HepG2 (cell line): ENCODE measurements at regions of chr5 and their contacts with region 1.

Region 1: DNA sequence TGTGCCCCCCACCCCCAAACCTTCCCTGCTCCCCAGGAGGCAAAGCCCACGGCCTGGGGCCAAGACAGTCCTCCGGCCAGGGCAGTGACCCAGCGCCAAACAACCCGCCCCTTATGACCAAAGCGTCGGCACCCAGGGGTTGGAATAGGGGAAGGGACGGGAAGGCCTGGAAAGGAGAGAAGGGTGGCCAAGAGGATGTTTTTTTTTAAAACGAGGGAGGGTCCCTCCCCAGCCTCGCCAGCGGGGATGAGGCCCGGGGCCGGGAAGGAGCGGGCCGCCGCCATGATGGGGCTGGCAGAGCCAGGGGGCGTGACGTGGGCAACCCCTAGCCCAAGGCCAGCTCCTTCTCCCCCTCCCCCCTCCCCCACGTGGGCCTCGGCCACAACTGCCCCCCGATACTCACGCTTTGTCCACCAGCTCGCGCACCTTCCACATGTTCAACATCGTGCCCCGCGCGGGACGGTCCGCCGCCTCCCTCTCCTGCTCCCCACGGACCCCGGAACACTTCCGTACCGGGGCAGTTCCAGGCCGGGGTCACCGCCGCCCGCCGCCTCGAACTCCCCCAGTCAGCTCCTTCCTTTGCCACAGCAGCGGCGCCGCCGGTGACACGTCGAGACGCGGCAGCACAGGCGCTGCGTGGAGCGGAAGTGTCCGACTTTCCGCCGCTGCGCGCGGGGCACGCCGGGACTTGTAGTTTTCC is at the start of gene CLINT1:
- DNase-seq: peak; percentile 83
- ATAC-seq: peak; percentile 96
- H3K4me3 ChIP-seq: peak within 1 kb of the TSS; percentile 82 to 92 (median 86)
- H3K27ac ChIP-seq: peak within 1 kb of the TSS; percentile 78
- H3K4me1 ChIP-seq: peaks cover 62% of the 10 kb centered on the region
- H3K27me3 ChIP-seq: no peaks in the 10 kb centered on the region
- CTCF ChIP-seq: 0 out of 2 replicates have a peak, but pooled peaks have one; percentile 25
- EP300 ChIP-seq: no peak; a peak in 1 of 4 replicates
- POLR2A ChIP-seq: peak; percentile 54 to 81
- RAD21 ChIP-seq: 0 out of 2 replicates have a peak, but pooled peaks have one; percentile 17
- total RNA-seq, gene CLINT1: 64.0 and 82.9 TPM in 2 replicates

Region 2: GRCh38 chr5:157180374-157181264 is 678.1 kb before region 1 on chr5 and contains the start of gene ITK:
- CTCF ChIA-PET with region 1: no interaction called
- POLR2A ChIA-PET with region 1: no interaction called
- in situ Hi-C with region 1: no loop called
- intact Hi-C with region 1: no loop called
- DNase-seq: no peak
- ATAC-seq: no peak
- H3K4me3 ChIP-seq: no peak within 1 kb of the TSS
- H3K27ac ChIP-seq: no peak within 1 kb of the TSS
- H3K4me1 ChIP-seq: no peaks in the 10 kb centered on the region
- H3K27me3 ChIP-seq: peaks cover 0 to 6% of the 10 kb centered on the region in 2 experiments; a peak in 1 of 5 replicates
- CTCF ChIP-seq: no peak
- EP300 ChIP-seq: no peak
- POLR2A ChIP-seq: no peak
- RAD21 ChIP-seq: no peak
- total RNA-seq, gene ITK: not detected in 2 replicates

Region 3: DNA sequence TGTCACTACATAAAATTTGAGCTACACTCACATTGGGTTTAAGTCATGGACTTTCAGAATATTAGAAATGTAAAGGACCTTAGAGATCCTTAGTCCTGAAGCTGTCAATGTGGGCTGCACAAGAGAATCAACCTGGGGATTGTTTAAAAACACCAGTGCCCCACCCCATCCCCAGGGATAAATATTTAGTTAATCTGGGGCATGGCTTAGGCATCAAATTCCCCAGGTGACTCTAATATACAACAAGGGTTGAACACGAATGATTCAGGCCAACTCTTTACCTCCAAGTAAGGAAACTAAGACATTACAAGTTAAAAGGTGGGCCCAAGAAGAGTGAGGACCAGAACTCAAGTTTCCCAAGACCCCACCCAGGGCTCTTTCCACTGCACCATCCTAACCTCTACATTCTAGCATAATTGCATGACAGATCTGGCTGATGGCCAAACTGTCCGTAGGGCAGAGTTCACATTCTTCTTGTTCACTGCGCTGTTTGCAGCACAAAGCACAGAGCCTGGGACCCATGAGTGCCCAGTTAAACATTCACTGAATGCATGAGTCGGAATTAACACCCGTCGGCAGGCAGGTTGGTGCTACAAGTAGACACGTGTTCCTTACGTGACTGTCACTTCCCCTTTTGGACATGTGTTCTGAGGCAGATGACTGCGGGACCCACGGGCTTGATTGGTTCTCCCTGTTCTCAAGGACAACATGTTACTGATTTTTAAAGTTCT is 567.5 kb before region 1 on chr5:
- CTCF ChIA-PET with region 1: no interaction called
- POLR2A ChIA-PET with region 1: no interaction called
- in situ Hi-C with region 1: no loop called
- intact Hi-C with region 1: no loop called
- DNase-seq: peak; percentile 99
- ATAC-seq: peak; percentile 96
- H3K4me3 ChIP-seq: no peak overlapping the region; a peak in 1 of 6 replicates
- H3K27ac ChIP-seq: peak overlapping the region; percentile 73
- H3K4me1 ChIP-seq: peaks cover 67% of the 10 kb centered on the region
- H3K27me3 ChIP-seq: no peaks in the 10 kb centered on the region
- CTCF ChIP-seq: no peak
- EP300 ChIP-seq: peak in 1 of 2 experiments; percentile 77; a peak in 2 of 4 replicates
- POLR2A ChIP-seq: no peak
- RAD21 ChIP-seq: no peak

Region 4: DNA sequence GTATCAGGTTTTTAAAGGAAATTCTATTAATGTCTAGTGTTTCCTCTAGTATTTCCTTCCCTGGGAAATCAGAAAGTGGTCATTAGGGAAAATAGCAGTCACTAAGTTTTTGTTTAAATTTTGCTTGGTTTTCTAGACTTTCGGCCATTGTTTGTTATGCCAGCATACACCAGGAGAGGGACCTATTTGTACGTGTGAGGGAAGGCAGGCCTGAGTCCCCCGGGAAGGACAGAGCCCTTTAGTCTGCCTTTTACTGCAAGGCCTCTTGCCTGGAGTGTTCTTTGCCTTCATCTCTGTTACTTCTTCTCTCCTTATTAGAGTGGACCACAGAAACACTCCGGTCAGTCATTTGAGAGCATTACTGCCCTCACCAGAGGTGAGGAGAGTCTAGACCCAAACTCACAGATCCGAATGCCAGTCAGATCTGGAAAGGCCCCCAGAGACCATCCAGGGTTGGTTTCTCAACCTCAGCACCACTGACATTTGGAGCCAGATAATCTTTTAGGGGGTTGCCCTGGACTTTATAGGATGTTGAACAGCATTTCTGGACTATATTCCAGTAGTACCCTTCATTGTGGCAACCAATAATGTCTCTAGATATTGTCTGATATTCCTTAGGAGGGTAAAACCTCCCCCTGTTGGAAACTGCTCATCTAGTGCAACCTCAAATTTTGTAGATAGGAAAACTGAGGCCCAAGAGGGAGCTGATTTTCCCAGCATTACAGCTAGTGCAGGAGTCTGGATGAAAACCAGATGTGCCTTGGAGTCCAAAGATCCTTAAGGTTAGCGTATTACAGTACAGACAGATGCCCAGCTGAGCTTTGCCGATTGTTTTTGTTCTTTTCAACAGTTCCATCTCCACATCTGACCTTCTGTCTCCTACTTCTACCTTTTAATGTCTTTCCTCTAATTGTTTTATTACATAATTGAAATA is 491.7 kb before region 1 on chr5:
- CTCF ChIA-PET with region 1: no interaction called
- POLR2A ChIA-PET with region 1: no interaction called
- in situ Hi-C with region 1: no loop called
- intact Hi-C with region 1: no loop called
- DNase-seq: peak; percentile 28
- ATAC-seq: peak; percentile 71
- H3K4me3 ChIP-seq: no peak overlapping the region
- H3K27ac ChIP-seq: no peak overlapping the region
- H3K4me1 ChIP-seq: no peaks in the 10 kb centered on the region
- H3K27me3 ChIP-seq: no peaks in the 10 kb centered on the region
- CTCF ChIP-seq: peak; percentile 65
- EP300 ChIP-seq: no peak
- POLR2A ChIP-seq: no peak
- RAD21 ChIP-seq: peak; percentile 30; the same call in 1 of the 2 replicates

Region 5: GRCh38 chr5:157563373-157563928 is 295.2 kb before region 1 on chr5:
- CTCF ChIA-PET with region 1: no interaction called
- POLR2A ChIA-PET with region 1: no interaction called
- in situ Hi-C with region 1: no loop called
- intact Hi-C with region 1: no loop called
- DNase-seq: no peak
- ATAC-seq: no peak; the same call in 2 of the 3 replicates
- H3K4me3 ChIP-seq: no peak overlapping the region
- H3K27ac ChIP-seq: no peak overlapping the region
- H3K4me1 ChIP-seq: peaks cover 20% of the 10 kb centered on the region
- H3K27me3 ChIP-seq: no peaks in the 10 kb centered on the region; a peak in 1 of 5 replicates
- CTCF ChIP-seq: no peak
- EP300 ChIP-seq: no peak
- POLR2A ChIP-seq: no peak
- RAD21 ChIP-seq: no peak

Region 6: DNA sequence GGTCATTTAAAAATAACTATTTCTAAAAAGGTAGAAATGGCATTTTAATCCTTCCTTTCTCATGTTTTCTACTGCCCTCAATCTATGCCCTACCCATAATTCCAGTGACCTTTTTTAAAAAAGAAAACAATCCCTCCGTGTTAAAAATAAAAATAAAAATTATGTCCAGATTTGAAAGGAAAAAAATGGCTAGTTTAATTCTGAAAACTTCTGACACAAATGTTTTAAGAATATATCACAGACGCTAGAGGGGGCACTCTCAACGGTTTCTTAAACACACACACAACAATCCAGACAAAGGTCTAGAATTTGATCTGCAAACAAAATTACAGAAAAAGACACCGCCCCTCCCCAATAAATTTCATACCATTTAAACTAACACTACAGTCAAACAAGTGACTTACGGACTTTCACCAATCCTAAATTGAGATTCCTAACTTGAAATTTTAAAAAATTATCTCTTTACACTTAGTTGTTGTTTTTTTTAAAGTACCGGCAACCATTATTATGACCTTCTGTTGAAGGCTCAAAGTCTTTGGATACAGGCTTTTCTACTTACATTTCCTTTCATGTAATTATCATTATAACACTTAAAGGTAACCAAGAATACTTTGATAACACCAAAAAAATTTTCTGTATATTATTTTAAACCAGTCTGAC is 38.0 kb before region 1 on chr5:
- CTCF ChIA-PET with region 1: interaction called, 3 read pairs
- POLR2A ChIA-PET with region 1: interaction called, 3 read pairs
- in situ Hi-C with region 1: no loop called
- intact Hi-C with region 1: loop called (anchors 2 kb)
- DNase-seq: peak; percentile 64
- ATAC-seq: peak; percentile 43; the same call in 2 of the 3 replicates
- H3K4me3 ChIP-seq: no peak overlapping the region
- H3K27ac ChIP-seq: no peak overlapping the region
- H3K4me1 ChIP-seq: peaks cover 37% of the 10 kb centered on the region
- H3K27me3 ChIP-seq: no peaks in the 10 kb centered on the region
- CTCF ChIP-seq: peak; percentile 49
- EP300 ChIP-seq: no peak
- POLR2A ChIP-seq: no peak
- RAD21 ChIP-seq: no peak

Region 7: GRCh38 chr5:157845894-157846598 is 12.6 kb before region 1 on chr5:
- CTCF ChIA-PET with region 1: no interaction called
- POLR2A ChIA-PET with region 1: interaction called, 12 read pairs
- in situ Hi-C with region 1: no loop called
- intact Hi-C with region 1: no loop called
- DNase-seq: peak; percentile 63
- ATAC-seq: peak; percentile 98
- H3K4me3 ChIP-seq: peak overlapping the region in 1 of 3 experiments; percentile 15; a peak in 1 of 6 replicates
- H3K27ac ChIP-seq: peak overlapping the region; percentile 29
- H3K4me1 ChIP-seq: peaks cover 34% of the 10 kb centered on the region
- H3K27me3 ChIP-seq: no peaks in the 10 kb centered on the region
- CTCF ChIP-seq: no peak
- EP300 ChIP-seq: no peak
- POLR2A ChIP-seq: no peak
- RAD21 ChIP-seq: no peak

Region 8: GRCh38 chr5:157917899-157918809 is 59.5 kb after region 1 on chr5:
- CTCF ChIA-PET with region 1: interaction called, 14 read pairs
- POLR2A ChIA-PET with region 1: no interaction called
- in situ Hi-C with region 1: no loop called
- intact Hi-C with region 1: loop called (anchors 1 kb)
- DNase-seq: peak; percentile 58
- ATAC-seq: peak; percentile 92
- H3K4me3 ChIP-seq: no peak overlapping the region
- H3K27ac ChIP-seq: no peak overlapping the region
- H3K4me1 ChIP-seq: peaks cover 14% of the 10 kb centered on the region; the same call in 1 of the 2 replicates
- H3K27me3 ChIP-seq: no peaks in the 10 kb centered on the region; a peak in 1 of 5 replicates
- CTCF ChIP-seq: peak; percentile 66
- EP300 ChIP-seq: no peak
- POLR2A ChIP-seq: no peak
- RAD21 ChIP-seq: peak; percentile 58

Region 9: DNA sequence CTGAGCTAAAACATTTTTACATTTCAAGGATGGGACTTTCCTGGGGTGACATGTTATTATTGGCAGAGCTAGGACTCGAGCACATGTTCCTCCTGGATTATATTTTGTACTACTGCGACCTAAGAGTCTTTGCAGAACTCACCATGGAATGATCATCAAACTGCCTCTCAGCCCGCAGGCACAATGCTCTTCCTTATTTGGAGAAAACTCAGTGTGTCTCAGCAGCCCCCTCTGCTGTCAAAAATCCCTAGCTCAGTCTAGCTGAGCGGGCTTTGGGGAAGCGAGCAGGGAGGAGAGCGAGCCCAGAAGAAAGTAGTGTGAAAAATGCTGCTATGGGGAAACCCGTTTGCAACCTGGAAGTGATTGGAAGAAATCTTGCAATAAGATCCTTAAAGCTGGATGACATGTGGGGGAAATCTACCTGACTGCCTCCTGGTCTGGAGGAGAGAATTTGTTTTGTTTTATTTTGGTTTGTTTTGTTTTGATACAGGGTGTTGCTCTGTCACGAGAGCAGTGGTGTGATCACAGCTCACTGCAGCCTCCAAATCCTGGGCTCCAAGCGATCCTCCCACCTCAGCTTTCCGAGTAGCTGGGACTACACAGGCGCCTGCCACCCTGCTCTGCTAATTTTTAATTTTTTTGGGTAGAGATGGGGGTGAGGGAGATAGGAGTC is 90.2 kb after region 1 on chr5:
- CTCF ChIA-PET with region 1: interaction called, 3 read pairs
- POLR2A ChIA-PET with region 1: interaction called, 6 read pairs
- in situ Hi-C with region 1: no loop called
- intact Hi-C with region 1: loop called (anchors 2 kb)
- DNase-seq: peak; percentile 92
- ATAC-seq: peak; percentile 100
- H3K4me3 ChIP-seq: no peak overlapping the region
- H3K27ac ChIP-seq: no peak overlapping the region
- H3K4me1 ChIP-seq: peaks cover 9% of the 10 kb centered on the region; the same call in 1 of the 2 replicates
- H3K27me3 ChIP-seq: no peaks in the 10 kb centered on the region; a peak in 1 of 5 replicates
- CTCF ChIP-seq: peak; percentile 90
- EP300 ChIP-seq: no peak
- POLR2A ChIP-seq: no peak
- RAD21 ChIP-seq: no peak; the same call in 1 of the 2 replicates

Region 10: GRCh38 chr5:157994906-157995519 is 136.3 kb after region 1 on chr5:
- CTCF ChIA-PET with region 1: no interaction called
- POLR2A ChIA-PET with region 1: no interaction called
- in situ Hi-C with region 1: no loop called
- intact Hi-C with region 1: loop called (anchors 1 kb)
- DNase-seq: peak; percentile 41
- ATAC-seq: peak; percentile 100
- H3K4me3 ChIP-seq: peak overlapping the region in 1 of 3 experiments; percentile 23; a peak in 1 of 6 replicates
- H3K27ac ChIP-seq: no peak overlapping the region
- H3K4me1 ChIP-seq: peaks cover 6% of the 10 kb centered on the region; the same call in 1 of the 2 replicates
- H3K27me3 ChIP-seq: 0 out of 5 replicates have a peak, but pooled peaks cover 0 to 6% of the 10 kb centered on the region in 2 experiments
- CTCF ChIP-seq: peak; percentile 87
- EP300 ChIP-seq: no peak
- POLR2A ChIP-seq: no peak
- RAD21 ChIP-seq: peak; percentile 60; the same call in 1 of the 2 replicates